ENCODE measurements at regions of chr2 and their contacts with region 1.

Region 1: GRCh38 chr2:118221666-118222594 is 133.7 kb downstream of the INSIG2 start:
- DNase-seq: peak; percentile 74
- ATAC-seq: peak; percentile 53
- H3K4me3 ChIP-seq: no peak overlapping the region
- H3K4me3 Mint-ChIP-seq: peak overlapping the region; percentile 4
- H3K27ac ChIP-seq: no peak overlapping the region
- H3K27ac Mint-ChIP-seq: no peak overlapping the region
- H3K4me1 ChIP-seq: peaks cover 18 to 22% of the 10 kb centered on the region in 2 donors
- H3K4me1 Mint-ChIP-seq: peaks cover 21% of the 10 kb centered on the region
- H3K27me3 ChIP-seq: peaks cover 5 to 49% (median 45%) of the 10 kb centered on the region in 4 experiments
- H3K27me3 Mint-ChIP-seq: peaks cover 64% of the 10 kb centered on the region
- CTCF ChIP-seq: peak; percentile 83

Region 2: GRCh38 chr2:118186110-118186857 is 35.6 kb before region 1 on chr2:
- CTCF ChIA-PET with region 1: interaction called, 7 read pairs
- POLR2A ChIA-PET with region 1: interaction called, 4 read pairs
- intact Hi-C with region 1: loop called (anchors 5 kb)
- DNase-seq: peak; percentile 89
- ATAC-seq: peak; percentile 93
- H3K4me3 ChIP-seq: peak overlapping the region; percentile 60 to 90 (median 80)
- H3K4me3 Mint-ChIP-seq: peak overlapping the region; percentile 90
- H3K27ac ChIP-seq: peak overlapping the region; percentile 56 to 75
- H3K27ac Mint-ChIP-seq: peak overlapping the region; percentile 89
- H3K4me1 ChIP-seq: peaks cover 0 to 14% of the 10 kb centered on the region in 2 donors
- H3K4me1 Mint-ChIP-seq: peaks cover 17% of the 10 kb centered on the region
- H3K27me3 ChIP-seq: peaks cover 0 to 3% (median 2%) of the 10 kb centered on the region in 4 experiments
- H3K27me3 Mint-ChIP-seq: peaks cover 6% of the 10 kb centered on the region
- CTCF ChIP-seq: no peak

Region 3: DNA sequence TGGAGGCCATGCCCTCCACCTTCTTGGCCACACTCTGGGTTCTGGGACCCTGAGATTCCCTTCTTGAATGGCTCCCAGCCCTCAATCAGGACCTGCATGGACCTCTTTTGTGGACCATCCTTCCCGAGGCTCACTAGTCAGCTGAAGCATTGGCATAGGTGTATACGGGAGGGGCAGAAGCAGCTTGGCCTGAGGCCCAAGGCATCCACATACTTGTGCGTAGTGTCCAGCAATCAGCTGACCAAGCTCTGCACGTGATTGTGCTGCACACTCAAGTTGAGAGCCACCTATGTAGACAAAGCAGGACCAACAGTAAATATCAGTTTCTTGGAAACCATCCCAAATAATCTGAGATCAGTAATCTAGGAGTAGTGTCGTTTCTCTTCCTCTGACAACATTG is 14.0 kb before region 1 on chr2:
- CTCF ChIA-PET with region 1: interaction called, 25 read pairs
- POLR2A ChIA-PET with region 1: no interaction called
- intact Hi-C with region 1: no loop called
- DNase-seq: no peak
- ATAC-seq: no peak
- H3K4me3 ChIP-seq: no peak overlapping the region
- H3K4me3 Mint-ChIP-seq: no peak overlapping the region
- H3K27ac ChIP-seq: no peak overlapping the region
- H3K27ac Mint-ChIP-seq: no peak overlapping the region
- H3K4me1 ChIP-seq: peaks cover 0 to 3% of the 10 kb centered on the region in 2 donors
- H3K4me1 Mint-ChIP-seq: peaks cover 2% of the 10 kb centered on the region
- H3K27me3 ChIP-seq: peaks cover 0 to 29% (median 16%) of the 10 kb centered on the region in 4 experiments
- H3K27me3 Mint-ChIP-seq: peaks cover 62% of the 10 kb centered on the region
- CTCF ChIP-seq: no peak

Region 4: DNA sequence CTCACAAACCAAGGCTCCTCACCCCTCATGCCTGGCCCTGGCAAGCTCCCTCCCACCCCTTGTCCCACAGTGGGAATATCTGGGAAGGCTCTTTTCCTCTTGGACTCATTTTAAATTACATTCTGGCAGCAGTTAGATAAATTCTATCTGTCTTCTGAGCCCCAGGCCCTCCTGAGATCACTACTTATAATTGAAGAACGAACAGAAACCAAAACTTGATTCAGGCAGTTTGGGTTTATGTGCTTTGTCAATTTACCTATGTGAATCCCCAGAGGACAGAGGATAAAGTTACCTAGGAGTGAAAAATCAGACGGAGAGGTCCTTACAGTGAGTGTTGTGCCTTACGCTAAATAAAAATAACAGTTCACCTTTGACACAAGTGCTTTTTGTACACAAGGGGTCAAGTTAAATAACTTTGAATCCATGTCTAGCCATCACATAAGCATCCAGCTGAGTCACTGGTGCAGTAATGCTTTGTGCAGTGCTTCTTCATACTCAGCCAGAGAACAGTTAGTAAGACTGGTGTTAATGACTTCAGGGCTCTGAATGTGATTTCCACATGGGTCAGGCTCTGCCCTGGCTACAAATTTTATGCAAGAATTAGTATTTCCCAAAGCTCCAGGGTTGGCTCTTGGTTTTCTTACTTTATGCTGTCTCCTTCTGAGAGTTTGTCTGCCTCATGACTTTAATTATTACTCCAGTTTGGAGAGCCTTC is 195.6 kb after region 1 on chr2:
- CTCF ChIA-PET with region 1: no interaction called
- POLR2A ChIA-PET with region 1: no interaction called
- intact Hi-C with region 1: no loop called
- DNase-seq: no peak
- ATAC-seq: no peak
- H3K4me3 ChIP-seq: no peak overlapping the region
- H3K4me3 Mint-ChIP-seq: no peak overlapping the region
- H3K27ac ChIP-seq: no peak overlapping the region
- H3K27ac Mint-ChIP-seq: no peak overlapping the region
- H3K4me1 ChIP-seq: no peaks in the 10 kb centered on the region
- H3K4me1 Mint-ChIP-seq: no peaks in the 10 kb centered on the region
- H3K27me3 ChIP-seq: peaks cover 0 to 3% (median 0%) of the 10 kb centered on the region in 4 experiments
- H3K27me3 Mint-ChIP-seq: peaks cover 5% of the 10 kb centered on the region
- CTCF ChIP-seq: no peak

Region 5: GRCh38 chr2:118865106-118865505 is 643.2 kb after region 1 on chr2:
- CTCF ChIA-PET with region 1: interaction called, 4 read pairs
- POLR2A ChIA-PET with region 1: no interaction called
- intact Hi-C with region 1: loop called (anchors 1 kb)
- DNase-seq: peak; percentile 52
- ATAC-seq: peak; percentile 57
- H3K4me3 ChIP-seq: no peak overlapping the region
- H3K4me3 Mint-ChIP-seq: no peak overlapping the region
- H3K27ac ChIP-seq: no peak overlapping the region
- H3K27ac Mint-ChIP-seq: no peak overlapping the region
- H3K4me1 ChIP-seq: no peaks in the 10 kb centered on the region
- H3K4me1 Mint-ChIP-seq: no peaks in the 10 kb centered on the region
- H3K27me3 ChIP-seq: peaks cover 0 to 28% (median 20%) of the 10 kb centered on the region in 4 experiments
- H3K27me3 Mint-ChIP-seq: peaks cover 44% of the 10 kb centered on the region
- CTCF ChIP-seq: peak; percentile 47

Measured in B cell (primary cell).